ENCODE measurements at regions of chr17 and their contacts with region 1.

Region 1: DNA sequence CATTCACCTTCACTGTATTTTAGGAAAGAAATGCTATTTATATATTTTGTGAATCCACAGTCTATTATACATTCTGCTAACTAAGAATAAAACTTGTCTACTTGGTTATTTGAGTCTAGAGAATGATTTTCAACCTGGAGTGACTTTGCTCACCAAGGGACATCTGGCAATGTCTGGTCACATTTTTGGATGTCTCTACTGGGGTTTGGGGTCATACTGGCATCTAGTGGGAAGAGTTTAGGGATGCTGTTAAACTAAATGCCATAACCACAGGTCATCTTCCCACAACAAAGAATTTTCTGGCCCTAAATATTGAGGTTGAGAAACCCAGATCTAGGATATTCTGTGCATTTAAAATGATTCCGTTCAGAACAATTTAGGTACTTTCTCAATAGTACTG is 26.0 kb downstream of the KCNJ16 start:
- DNase-seq: no peak
- ATAC-seq: no peak
- H3K4me3 ChIP-seq: no peak overlapping the region
- H3K4me3 Mint-ChIP-seq: no peak overlapping the region
- H3K27ac ChIP-seq: no peak overlapping the region
- H3K27ac Mint-ChIP-seq: no peak overlapping the region
- H3K4me1 ChIP-seq: no peaks in the 10 kb centered on the region
- H3K4me1 Mint-ChIP-seq: no peaks in the 10 kb centered on the region
- H3K27me3 ChIP-seq: no peaks in the 10 kb centered on the region
- H3K27me3 Mint-ChIP-seq: no peaks in the 10 kb centered on the region
- CTCF ChIP-seq: no peak

Region 2: GRCh38 chr17:70006159-70006558 is 94.8 kb before region 1 on chr17:
- CTCF ChIA-PET with region 1: no interaction called
- POLR2A ChIA-PET with region 1: no interaction called
- intact Hi-C with region 1: no loop called
- DNase-seq: no peak
- ATAC-seq: no peak
- H3K4me3 ChIP-seq: no peak overlapping the region
- H3K4me3 Mint-ChIP-seq: no peak overlapping the region
- H3K27ac ChIP-seq: no peak overlapping the region
- H3K27ac Mint-ChIP-seq: no peak overlapping the region
- H3K4me1 ChIP-seq: no peaks in the 10 kb centered on the region
- H3K4me1 Mint-ChIP-seq: no peaks in the 10 kb centered on the region
- H3K27me3 ChIP-seq: no peaks in the 10 kb centered on the region
- H3K27me3 Mint-ChIP-seq: no peaks in the 10 kb centered on the region
- CTCF ChIP-seq: no peak

Region 3: GRCh38 chr17:70168977-70169708 is 68.2 kb after region 1 on chr17 and contains the start of gene KCNJ2:
- CTCF ChIA-PET with region 1: no interaction called
- POLR2A ChIA-PET with region 1: no interaction called
- intact Hi-C with region 1: loop called in 1 of 2 experiments (anchors 10 kb)
- DNase-seq: peak in 9 of 14 experiments; percentile 1 to 74 (median 15)
- ATAC-seq: peak; percentile 57
- H3K4me3 ChIP-seq: peak within 1 kb of the TSS; percentile 46
- H3K4me3 Mint-ChIP-seq: peak within 1 kb of the TSS; percentile 80
- H3K27ac ChIP-seq: no peak within 1 kb of the TSS
- H3K27ac Mint-ChIP-seq: no peak within 1 kb of the TSS
- H3K4me1 ChIP-seq: peaks cover 13% of the 10 kb centered on the region
- H3K4me1 Mint-ChIP-seq: peaks cover 22% of the 10 kb centered on the region
- H3K27me3 ChIP-seq: peaks cover 22 to 40% of the 10 kb centered on the region in 2 experiments
- H3K27me3 Mint-ChIP-seq: peaks cover 75% of the 10 kb centered on the region
- CTCF ChIP-seq: no peak
- total RNA-seq, gene KCNJ2: not detected